Spleen (tissue), 13 donors: ENCODE measurements at regions of chr3 and their contacts with region 1.

Region 1: DNA sequence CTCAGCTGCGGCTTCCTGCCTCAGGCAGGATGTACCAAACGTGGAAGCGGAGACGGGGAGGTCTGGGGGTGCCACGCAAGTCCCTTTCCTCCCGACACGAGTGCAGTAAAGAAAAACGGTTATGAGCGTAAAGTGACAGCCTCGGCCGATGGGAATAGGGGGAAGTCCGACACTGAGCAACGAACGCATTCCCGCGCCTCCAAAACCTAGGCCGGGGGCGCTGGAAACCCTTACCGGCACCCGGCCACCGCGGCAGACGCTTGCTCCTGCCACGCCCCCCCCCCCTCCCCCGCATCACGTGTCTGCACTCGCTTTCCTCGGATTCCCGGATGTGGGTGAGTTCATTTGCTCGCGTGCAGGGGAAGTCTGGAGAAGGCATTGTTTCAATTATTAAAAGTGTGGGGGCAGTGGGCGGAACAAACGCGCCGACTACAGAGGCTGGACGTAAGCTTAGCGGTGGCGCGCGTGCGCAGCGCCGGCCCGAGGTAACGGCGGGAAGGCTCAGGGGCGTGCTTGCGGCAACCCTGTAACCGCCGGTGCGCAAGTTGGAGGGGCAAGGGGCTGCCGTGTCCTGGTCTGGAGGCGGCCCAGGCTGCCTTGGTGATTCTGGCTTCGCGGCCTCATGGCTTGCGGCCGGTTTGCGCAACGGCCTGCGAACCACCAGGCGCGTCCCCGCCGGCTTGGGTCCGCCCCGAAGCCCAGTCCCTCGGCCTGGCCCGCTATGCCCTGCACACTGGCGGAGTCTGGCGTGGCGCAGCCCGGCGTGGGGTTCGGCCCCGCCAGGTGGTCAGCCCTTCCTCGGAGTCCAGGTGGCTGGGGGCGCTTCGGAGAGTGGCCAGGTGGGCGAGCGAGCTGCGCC is at the starts of genes ANAPC13 and CEP63:
- DNase-seq: peak; percentile 98
- H3K4me3 ChIP-seq: peak within 1 kb of the TSS; percentile 53 to 85 (median 80)
- H3K27ac ChIP-seq: peak within 1 kb of the TSS; percentile 91 to 99 (median 98)
- H3K4me1 ChIP-seq: peaks cover 30 to 68% (median 47%) of the 10 kb centered on the region in 6 donors
- H3K27me3 ChIP-seq: no peaks in the 10 kb centered on the region
- CTCF ChIP-seq: peak in 3 of 11 experiments; percentile 12 to 29 (median 22)
- POLR2A ChIP-seq: peak in 2 of 3 donors; percentile 29 to 37
- total RNA-seq, gene ANAPC13: 31.1 to 64.8 (median 49.4) TPM
- total RNA-seq, gene CEP63: 27.0 to 37.0 (median 29.7) TPM

Region 2: DNA sequence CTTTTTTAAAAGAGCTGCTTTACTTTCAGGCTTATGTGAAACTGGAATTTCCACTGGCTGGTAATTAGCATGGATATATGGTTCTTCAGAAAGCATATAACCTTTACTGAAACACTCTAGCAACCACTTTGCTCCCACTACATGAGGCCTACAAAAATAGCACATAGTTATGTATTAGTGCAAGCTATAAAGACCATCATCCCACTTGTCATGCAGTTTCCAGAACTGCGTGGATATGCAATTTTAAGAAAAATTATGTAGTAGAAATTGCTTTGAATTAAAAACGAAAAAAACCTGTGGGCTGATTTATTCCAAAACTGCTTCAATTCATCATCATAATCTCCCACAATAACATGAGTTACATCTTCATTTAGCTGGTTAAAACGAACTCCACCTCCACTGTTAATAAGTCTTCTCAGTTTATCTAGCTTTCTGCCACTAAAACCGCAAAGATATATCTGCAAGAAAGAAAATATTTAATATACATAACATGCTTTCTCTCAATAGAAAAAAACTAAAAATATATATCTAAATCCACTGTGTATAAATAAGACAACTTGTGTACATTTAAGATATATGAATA is 836.4 kb before region 1 on chr3:
- intact Hi-C with region 1: loop called (anchors 10 kb)
- DNase-seq: no peak
- H3K4me3 ChIP-seq: no peak overlapping the region
- H3K27ac ChIP-seq: no peak overlapping the region
- H3K4me1 ChIP-seq: no peaks in the 10 kb centered on the region
- H3K27me3 ChIP-seq: no peaks in the 10 kb centered on the region
- CTCF ChIP-seq: no peak
- POLR2A ChIP-seq: no peak